H1 (cell line): ENCODE measurements at regions of chr2 and their contacts with region 1.

Region 1: GRCh38 chr2:120867290-120868241 is 131.9 kb downstream of the GLI2 start:
- DNase-seq: peak in 1 of 2 experiments; percentile 78
- H3K4me3 ChIP-seq: peak overlapping the region in 2 of 4 experiments; percentile 6 to 42; a peak in 4 of 8 replicates
- H3K27ac ChIP-seq: no peak overlapping the region
- H3K4me1 ChIP-seq: peaks cover 9 to 40% (median 18%) of the 10 kb centered on the region in 4 experiments
- H3K27me3 ChIP-seq: peaks cover 0 to 4% (median 0%) of the 10 kb centered on the region in 4 experiments; a peak in 1 of 7 replicates
- CTCF ChIP-seq: no peak
- EP300 ChIP-seq: no peak
- POLR2A ChIP-seq: no peak
- RAD21 ChIP-seq: no peak

Region 2: DNA sequence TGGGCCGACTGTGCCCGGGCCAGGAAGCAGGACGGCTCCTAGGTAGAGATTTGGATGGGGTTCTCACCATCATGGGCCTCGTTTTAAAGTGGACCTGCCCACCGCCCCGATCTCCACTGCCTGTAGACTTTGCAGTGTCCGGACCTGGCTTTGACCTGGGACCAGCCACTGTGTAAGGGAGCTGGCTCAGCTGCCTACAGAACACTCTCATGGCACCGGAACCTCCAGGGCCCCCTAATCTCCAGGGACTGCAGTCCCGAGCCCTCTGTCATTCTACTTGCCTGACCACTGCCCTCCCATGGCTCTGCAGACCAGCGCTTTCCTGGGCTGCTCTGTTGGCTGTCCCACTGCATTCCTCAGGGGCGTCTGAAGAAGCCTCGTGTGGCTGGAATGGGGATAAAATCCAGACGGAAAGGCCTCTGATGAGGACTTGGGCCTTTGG is 11.1 kb before region 1 on chr2:
- CTCF ChIA-PET with region 1: interaction called, 158 read pairs
- POLR2A ChIA-PET with region 1: interaction called, 3 read pairs
- DNase-seq: no peak
- H3K4me3 ChIP-seq: no peak overlapping the region
- H3K27ac ChIP-seq: no peak overlapping the region
- H3K4me1 ChIP-seq: peaks cover 2 to 28% (median 19%) of the 10 kb centered on the region in 4 experiments
- H3K27me3 ChIP-seq: no peaks in the 10 kb centered on the region
- CTCF ChIP-seq: peak; percentile 41 to 53 (median 51)
- EP300 ChIP-seq: no peak
- POLR2A ChIP-seq: no peak
- RAD21 ChIP-seq: peak; percentile 41 to 57